Posterior vena cava (tissue), 2 donors: ENCODE measurements at regions of chr2 and their contacts with region 1.

Region 1: GRCh38 chr2:69547984-69548715 is 95.4 kb downstream of the AAK1 start:
- DNase-seq: no peak

Region 2: DNA sequence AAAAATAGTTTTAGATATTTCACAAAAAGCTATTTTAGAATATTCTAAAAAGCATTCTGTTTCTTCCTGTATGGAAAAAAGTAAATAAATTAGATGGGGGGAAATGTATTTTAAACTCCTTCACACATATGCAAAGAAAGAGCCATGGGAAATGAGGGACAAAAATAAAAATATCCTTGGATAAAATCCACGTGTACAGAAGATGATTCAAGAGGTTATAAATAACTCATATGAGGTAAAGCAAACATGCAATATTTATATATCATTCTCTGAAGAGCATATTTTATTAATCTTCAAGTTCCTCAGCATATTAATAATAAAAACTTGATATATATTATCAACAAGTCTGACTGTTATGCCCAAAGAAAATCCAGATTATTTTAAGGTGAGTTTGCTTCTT is 152.3 kb before region 1 on chr2:
- intact Hi-C with region 1: no loop called
- DNase-seq: no peak

Region 3: DNA sequence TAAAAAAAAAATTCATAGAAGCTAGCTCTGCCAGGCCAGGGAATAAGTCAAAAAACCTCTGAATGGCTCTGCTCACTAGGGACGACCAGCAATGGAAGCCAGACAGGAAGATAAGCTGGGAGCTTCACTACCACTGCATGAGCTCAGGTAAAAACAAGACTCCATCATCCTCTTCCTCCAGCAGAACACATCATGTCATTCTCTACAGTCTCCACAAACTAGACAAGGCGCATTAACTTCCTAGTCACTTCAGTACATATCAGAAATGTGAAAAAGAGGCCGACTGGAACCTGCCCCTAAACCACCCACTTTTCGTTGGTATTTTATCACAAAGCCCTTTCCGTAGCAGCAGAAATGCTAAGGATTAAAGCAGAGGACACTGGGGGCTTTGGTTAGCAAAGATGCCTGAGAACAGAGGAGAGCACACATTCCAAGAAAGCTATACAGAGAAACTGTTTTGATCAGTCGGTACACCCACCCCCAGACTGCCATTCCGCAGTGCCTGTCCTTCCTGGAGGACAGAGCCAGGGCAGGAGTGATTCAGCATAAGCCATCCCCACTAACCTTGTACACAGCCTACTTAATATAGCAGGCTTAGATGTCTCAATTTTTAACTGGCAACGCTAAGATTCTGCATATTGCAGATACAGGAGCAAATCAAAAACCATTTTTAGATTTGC is 42.0 kb after region 1 on chr2:
- intact Hi-C with region 1: loop called in 1 of 2 experiments (anchors 2 kb)
- DNase-seq: no peak